Activated CD4-positive, alpha-beta T cell treated with anti-CD3 and anti-CD28 coated beads, Interleukin-2, amount 10 ng/mL, durations not matched to agents 7 days and 5 days (primary cell): ENCODE measurements at regions of chr9 and their contacts with region 1.

Region 1: DNA sequence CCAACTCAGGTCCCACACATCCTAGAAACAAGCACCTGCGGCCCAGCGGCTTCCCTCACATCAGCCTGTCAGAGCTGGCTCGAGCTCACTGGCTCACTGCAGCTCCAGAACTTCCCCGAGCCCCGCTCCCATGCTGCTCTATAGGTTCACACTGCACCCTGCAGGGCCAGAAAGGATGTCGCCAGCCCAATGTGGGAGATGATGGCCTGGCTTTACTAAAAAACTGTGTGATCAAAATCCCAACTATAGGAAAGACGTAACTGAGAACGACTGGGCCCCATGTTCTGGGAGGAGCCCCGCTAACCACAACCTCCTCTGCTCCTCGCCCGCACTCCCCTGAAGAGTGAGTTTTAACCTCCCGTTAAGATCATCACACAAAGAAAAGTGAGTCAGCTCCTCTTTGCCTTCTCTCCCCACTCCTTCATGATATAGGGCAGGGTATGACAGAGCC is 4.6 kb downstream of the SURF4 start:
- DNase-seq: peak; percentile 70
- H3K4me3 Mint-ChIP-seq: peak overlapping the region; percentile 69
- H3K27ac Mint-ChIP-seq: peak overlapping the region; percentile 92
- H3K4me1 Mint-ChIP-seq: peaks cover 66% of the 10 kb centered on the region
- H3K27me3 Mint-ChIP-seq: no peaks in the 10 kb centered on the region

Region 2: GRCh38 chr9:132787748-132788159 is 583.5 kb before region 1 on chr9:
- CTCF ChIA-PET with region 1: no interaction called
- POLR2A ChIA-PET with region 1: interaction called, 12 read pairs
- DNase-seq: no peak
- H3K4me3 Mint-ChIP-seq: no peak overlapping the region
- H3K27ac Mint-ChIP-seq: no peak overlapping the region
- H3K4me1 Mint-ChIP-seq: no peaks in the 10 kb centered on the region
- H3K27me3 Mint-ChIP-seq: peaks cover 30% of the 10 kb centered on the region

Region 3: DNA sequence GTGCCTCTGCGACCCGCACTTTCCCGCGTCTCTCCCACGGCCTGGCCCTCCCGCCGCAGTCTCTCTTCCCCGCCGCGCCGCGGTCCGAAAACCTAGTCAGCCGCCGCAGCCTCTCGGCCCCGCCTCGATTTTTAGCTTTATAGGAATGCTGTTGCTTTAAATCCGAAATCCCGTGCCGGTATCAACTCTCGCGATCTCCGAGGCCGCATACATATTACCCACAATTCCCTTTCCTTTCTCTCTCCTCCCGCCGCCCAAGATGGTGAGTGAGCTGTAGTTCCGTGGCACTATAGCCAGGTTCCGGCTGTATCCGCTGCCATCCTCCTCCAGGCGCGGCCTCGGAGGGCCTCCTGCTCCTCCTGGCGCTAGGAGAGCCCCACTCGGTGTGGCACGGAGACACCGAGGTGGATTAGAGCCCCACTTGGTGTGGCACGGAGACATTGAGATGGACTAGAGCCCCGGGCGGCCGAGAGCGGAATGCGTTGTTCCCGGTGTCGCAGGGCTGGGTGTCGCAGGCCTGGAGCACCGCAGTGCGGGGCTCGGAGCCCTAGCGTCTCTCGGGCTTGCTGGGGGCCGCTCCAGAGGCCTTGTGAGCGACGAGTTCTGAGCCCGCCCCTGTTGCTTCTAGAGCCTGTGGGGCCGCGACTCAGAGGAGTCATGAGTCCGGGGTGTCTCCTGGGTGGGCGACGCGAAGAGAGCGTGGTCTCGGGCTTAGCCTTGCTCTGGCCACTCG is 23.1 kb before region 1 on chr9 and contains the starts of genes MED22 and RPL7A:
- CTCF ChIA-PET with region 1: interaction called, 10 read pairs
- POLR2A ChIA-PET with region 1: interaction called, 17 read pairs
- DNase-seq: peak; percentile 95
- H3K4me3 Mint-ChIP-seq: peak within 1 kb of the TSS; percentile 100
- H3K27ac Mint-ChIP-seq: peak within 1 kb of the TSS; percentile 98
- H3K4me1 Mint-ChIP-seq: peaks cover 43% of the 10 kb centered on the region
- H3K27me3 Mint-ChIP-seq: no peaks in the 10 kb centered on the region
- total RNA-seq, gene MED22: 25.6 to 27.2 TPM
- total RNA-seq, gene RPL7A: 1,880 to 1,928 TPM

Region 4: GRCh38 chr9:133356391-133357091 is 14.7 kb before region 1 on chr9 and contains the starts of genes SURF1 and SURF2:
- CTCF ChIA-PET with region 1: interaction called, 11 read pairs
- POLR2A ChIA-PET with region 1: interaction called, 7 read pairs
- DNase-seq: peak; percentile 92
- H3K4me3 Mint-ChIP-seq: peak within 1 kb of the TSS; percentile 85
- H3K27ac Mint-ChIP-seq: peak within 1 kb of the TSS; percentile 88
- H3K4me1 Mint-ChIP-seq: peaks cover 50% of the 10 kb centered on the region
- H3K27me3 Mint-ChIP-seq: no peaks in the 10 kb centered on the region
- total RNA-seq, gene SURF1: 39.4 to 48.9 TPM
- total RNA-seq, gene SURF2: 14.8 to 16.0 TPM

Region 5: GRCh38 chr9:133421615-133422542 is 50.6 kb after region 1 on chr9 and contains the start of gene ADAMTS13:
- CTCF ChIA-PET with region 1: no interaction called
- POLR2A ChIA-PET with region 1: no interaction called
- DNase-seq: no peak
- H3K4me3 Mint-ChIP-seq: no peak within 1 kb of the TSS
- H3K27ac Mint-ChIP-seq: no peak within 1 kb of the TSS
- H3K4me1 Mint-ChIP-seq: peaks cover 27% of the 10 kb centered on the region
- H3K27me3 Mint-ChIP-seq: peaks cover 3% of the 10 kb centered on the region
- total RNA-seq, gene ADAMTS13: 2.3 to 3.0 TPM